Common myeloid progenitor, CD34-positive (primary cell): ENCODE measurements at regions of chr6 and their contacts with region 1.

Region 1: GRCh38 chr6:110841266-110841665 is 26.0 kb upstream of the CDK19 start:
- DNase-seq: peak in 1 of 3 donors; percentile 20
- H3K4me3 ChIP-seq: peak overlapping the region in 1 of 7 experiments; percentile 16
- H3K27ac ChIP-seq: no peak overlapping the region
- H3K4me1 ChIP-seq: peaks cover 0 to 5% (median 0%) of the 10 kb centered on the region in 4 experiments
- H3K27me3 ChIP-seq: no peaks in the 10 kb centered on the region

Region 2: GRCh38 chr6:110590821-110591351 is 250.4 kb before region 1 on chr6:
- CTCF ChIA-PET with region 1: no interaction called
- POLR2A ChIA-PET with region 1: no interaction called
- DNase-seq: no peak
- H3K4me3 ChIP-seq: no peak overlapping the region
- H3K27ac ChIP-seq: no peak overlapping the region
- H3K4me1 ChIP-seq: peaks cover 0 to 4% (median 1%) of the 10 kb centered on the region in 4 experiments
- H3K27me3 ChIP-seq: no peaks in the 10 kb centered on the region

Region 3: GRCh38 chr6:110856296-110856695 is 15.0 kb after region 1 on chr6:
- CTCF ChIA-PET with region 1: interaction called, 10 read pairs
- POLR2A ChIA-PET with region 1: no interaction called
- DNase-seq: peak in 2 of 3 donors; percentile 25 to 44
- H3K4me3 ChIP-seq: no peak overlapping the region
- H3K27ac ChIP-seq: no peak overlapping the region
- H3K4me1 ChIP-seq: peaks cover 2 to 26% (median 16%) of the 10 kb centered on the region in 4 experiments
- H3K27me3 ChIP-seq: no peaks in the 10 kb centered on the region